ENCODE measurements at regions of chr11 and their contacts with region 1.

Region 1: DNA sequence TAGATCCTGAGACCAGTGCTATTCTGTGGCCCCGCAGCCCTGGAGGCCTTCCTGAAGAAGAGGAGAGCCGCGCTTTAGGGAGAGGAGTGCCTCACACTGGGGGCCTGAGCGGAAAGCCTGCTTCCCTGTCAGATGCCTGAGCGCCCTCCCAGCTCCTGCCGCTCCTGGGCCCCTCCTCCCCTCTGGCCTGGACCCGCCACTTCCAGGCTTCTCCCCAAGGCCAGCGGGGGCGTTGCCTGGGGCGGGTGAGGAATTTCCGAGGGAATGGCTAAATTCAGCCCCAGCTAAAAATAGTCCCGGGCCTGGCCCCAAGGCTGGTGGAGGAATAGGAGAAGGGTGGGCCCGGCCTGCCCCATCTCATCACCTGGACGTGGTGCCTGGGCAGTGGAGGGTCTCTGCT is 15.4 kb downstream of the ARHGEF17 start:
- DNase-seq: peak; percentile 86 to 91 (median 89)
- ATAC-seq: peak; percentile 52 to 84 (median 60)
- H3K4me3 ChIP-seq: peak overlapping the region in 6 of 12 donors; percentile 6 to 32 (median 16)
- H3K27ac ChIP-seq: peak overlapping the region; percentile 49 to 99 (median 86)
- H3K4me1 ChIP-seq: peaks cover 31 to 100% (median 89%) of the 10 kb centered on the region in 12 donors
- H3K27me3 ChIP-seq: no peaks in the 10 kb centered on the region
- CTCF ChIP-seq: peak in 1 of 12 donors; percentile 19
- POLR2A ChIP-seq: peak in 1 of 2 donors; percentile 51

Region 2: DNA sequence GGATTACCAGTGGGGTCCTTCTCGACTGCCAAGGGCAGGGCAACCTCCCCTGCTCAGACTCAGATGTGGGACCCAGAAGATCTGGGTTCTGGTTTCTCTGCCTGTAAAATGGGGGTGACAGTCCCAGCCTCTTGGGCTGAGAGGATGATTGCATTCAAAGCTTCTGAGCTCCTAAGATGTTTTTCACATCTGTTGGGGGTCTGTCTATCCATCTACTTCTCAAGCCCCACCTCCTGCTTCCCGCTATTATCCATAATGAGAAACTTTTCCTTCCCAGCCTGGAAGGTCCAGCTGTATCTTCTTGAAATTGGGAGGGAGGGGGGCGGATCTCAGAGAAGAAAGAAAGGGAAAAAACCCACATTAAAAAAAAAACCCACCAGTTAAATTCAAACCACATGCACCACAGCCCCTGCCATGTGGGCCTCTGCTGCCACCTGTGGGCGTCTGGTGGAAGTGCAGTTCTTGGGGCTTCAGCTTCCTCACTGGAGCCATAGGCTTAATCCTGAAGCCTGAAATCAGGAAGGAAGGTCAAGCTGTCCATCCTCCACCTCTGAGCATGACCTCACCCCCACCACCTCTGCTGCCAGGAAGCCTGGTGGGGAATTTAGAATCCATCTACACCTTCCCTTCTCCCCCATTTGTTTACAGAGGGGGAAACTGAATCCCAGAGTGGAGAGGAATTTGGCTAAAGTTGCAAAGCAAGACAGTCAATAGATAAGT is 11.9 kb after region 1 on chr11:
- intact Hi-C with region 1: loop called in 1 of 10 experiments (anchors 1 kb)
- DNase-seq: peak; percentile 75 to 90 (median 83)
- ATAC-seq: peak; percentile 47 to 79 (median 64)
- H3K4me3 ChIP-seq: peak overlapping the region in 4 of 12 donors; percentile 5 to 28 (median 14)
- H3K27ac ChIP-seq: peak overlapping the region; percentile 27 to 87 (median 78)
- H3K4me1 ChIP-seq: peaks cover 13 to 78% (median 56%) of the 10 kb centered on the region in 12 donors
- H3K27me3 ChIP-seq: no peaks in the 10 kb centered on the region
- CTCF ChIP-seq: peak; percentile 93 to 100 (median 99)
- POLR2A ChIP-seq: no peak